ENCODE measurements at regions of chr1 and their contacts with region 1.

Region 1: DNA sequence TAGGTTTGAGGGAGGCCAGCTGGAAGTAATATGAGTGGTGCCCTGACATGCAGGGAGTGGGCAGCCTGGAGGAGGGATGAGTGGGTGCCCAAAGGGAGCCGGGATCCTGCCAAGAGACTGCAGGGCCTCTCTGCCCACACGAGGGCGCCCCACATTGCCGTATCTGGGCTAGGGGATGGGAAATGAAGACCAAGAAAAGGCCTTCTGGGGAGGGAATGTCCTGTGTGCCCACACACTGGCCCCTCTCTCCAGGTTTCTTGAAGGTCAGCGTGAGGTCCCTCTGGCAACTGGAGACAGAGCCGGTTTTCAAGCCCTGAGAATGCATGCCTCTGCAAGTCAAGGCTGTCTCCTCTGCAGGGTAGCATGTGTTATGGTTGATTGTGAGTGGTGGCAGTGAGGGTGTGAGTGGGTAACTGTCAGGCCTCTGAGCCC is 94.1 kb upstream of the PPM1J start:
- DNase-seq: peak; percentile 19 to 71 (median 38)
- ATAC-seq: peak; percentile 87
- H3K4me3 ChIP-seq: no peak overlapping the region
- H3K4me3 Mint-ChIP-seq: no peak overlapping the region
- H3K27ac ChIP-seq: no peak overlapping the region
- H3K27ac Mint-ChIP-seq: no peak overlapping the region
- H3K4me1 ChIP-seq: no peaks in the 10 kb centered on the region
- H3K4me1 Mint-ChIP-seq: no peaks in the 10 kb centered on the region
- H3K27me3 ChIP-seq: no peaks in the 10 kb centered on the region
- H3K27me3 Mint-ChIP-seq: peaks cover 0 to 26% (median 0%) of the 10 kb centered on the region in 5 donors

Region 2: GRCh38 chr1:112882271-112882744 is 73.0 kb after region 1 on chr1:
- CTCF ChIA-PET with region 1: interaction called, 3 read pairs
- POLR2A ChIA-PET with region 1: no interaction called
- intact Hi-C with region 1: loop called in 1 of 2 experiments (anchors 2 kb)
- DNase-seq: no peak
- ATAC-seq: peak; percentile 16
- H3K4me3 ChIP-seq: no peak overlapping the region
- H3K4me3 Mint-ChIP-seq: no peak overlapping the region
- H3K27ac ChIP-seq: no peak overlapping the region
- H3K27ac Mint-ChIP-seq: no peak overlapping the region
- H3K4me1 ChIP-seq: no peaks in the 10 kb centered on the region
- H3K4me1 Mint-ChIP-seq: peaks cover 0 to 3% (median 0%) of the 10 kb centered on the region in 7 donors
- H3K27me3 ChIP-seq: no peaks in the 10 kb centered on the region
- H3K27me3 Mint-ChIP-seq: peaks cover 0 to 24% (median 4%) of the 10 kb centered on the region in 5 donors

Region 3: DNA sequence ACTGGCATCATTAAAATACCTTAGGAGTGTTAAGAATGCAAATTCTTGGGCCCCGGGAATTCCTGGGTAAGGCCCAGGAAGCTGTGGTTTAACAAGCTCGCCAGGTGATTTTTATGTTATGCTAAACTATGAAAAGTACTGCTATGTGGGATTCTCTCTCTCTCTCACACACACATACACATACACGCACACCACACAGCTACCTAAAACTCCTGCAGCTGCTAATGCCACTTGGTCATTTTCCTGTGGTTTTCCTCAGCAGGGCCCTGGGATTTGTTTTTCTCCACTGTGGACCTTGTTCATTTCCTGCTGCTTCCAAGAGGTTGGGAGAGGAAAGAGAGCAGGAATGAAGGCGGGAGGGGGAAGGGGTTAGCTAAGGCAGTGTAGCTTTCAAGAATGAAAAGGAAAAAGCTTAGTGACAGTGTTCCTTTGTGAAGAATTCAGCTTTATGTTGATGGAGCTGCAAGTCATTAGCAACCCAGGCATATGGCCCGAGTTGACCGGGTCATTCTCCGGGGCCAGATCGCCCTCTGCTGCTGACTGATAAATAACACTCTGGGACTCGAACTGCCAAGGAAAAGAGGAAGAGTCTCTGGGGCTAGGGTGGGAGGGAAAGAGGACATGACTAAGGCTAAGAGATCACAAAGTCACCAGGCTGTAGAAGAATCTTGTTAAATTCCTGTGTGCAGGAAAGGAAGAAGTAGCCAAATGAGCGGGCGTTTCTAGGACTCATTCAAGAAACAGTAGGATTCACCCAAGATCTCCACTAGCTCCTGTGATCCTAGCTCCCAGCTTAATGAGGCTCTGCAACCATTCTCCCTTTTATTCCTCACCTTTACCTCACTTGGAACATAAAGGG is 233.2 kb after region 1 on chr1:
- CTCF ChIA-PET with region 1: interaction called, 3 read pairs
- POLR2A ChIA-PET with region 1: no interaction called
- intact Hi-C with region 1: loop called (anchors 1 kb)
- DNase-seq: peak in 1 of 9 donors; percentile 13
- ATAC-seq: peak; percentile 83
- H3K4me3 ChIP-seq: no peak overlapping the region
- H3K4me3 Mint-ChIP-seq: no peak overlapping the region
- H3K27ac ChIP-seq: no peak overlapping the region
- H3K27ac Mint-ChIP-seq: peak overlapping the region in 2 of 9 donors; percentile 58 to 60
- H3K4me1 ChIP-seq: peaks cover 6 to 18% of the 10 kb centered on the region in 2 donors
- H3K4me1 Mint-ChIP-seq: peaks cover 16 to 37% (median 22%) of the 10 kb centered on the region in 7 donors
- H3K27me3 ChIP-seq: no peaks in the 10 kb centered on the region
- H3K27me3 Mint-ChIP-seq: peaks cover 0 to 10% (median 0%) of the 10 kb centered on the region in 5 donors

Region 4: DNA sequence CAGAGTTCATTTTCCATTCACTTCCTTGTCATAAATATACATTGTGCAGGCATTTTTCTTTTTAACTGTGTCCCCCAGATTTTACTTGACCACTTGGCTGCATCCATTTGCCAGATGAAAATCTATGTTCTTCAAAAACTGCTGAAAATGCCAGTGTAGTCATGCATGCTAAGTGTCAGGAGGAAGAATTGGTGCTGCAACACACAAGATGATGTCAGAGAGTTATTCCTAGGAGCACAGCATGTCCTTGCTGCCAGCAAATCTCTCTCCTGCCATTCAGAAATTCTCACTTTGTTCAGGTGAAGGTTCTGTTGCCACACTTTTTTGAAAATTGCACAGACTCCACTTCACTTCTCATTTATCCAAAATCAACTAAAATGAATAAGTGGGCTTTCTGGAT is 474.6 kb after region 1 on chr1:
- CTCF ChIA-PET with region 1: no interaction called
- POLR2A ChIA-PET with region 1: no interaction called
- intact Hi-C with region 1: no loop called
- DNase-seq: no peak
- ATAC-seq: no peak
- H3K4me3 ChIP-seq: no peak overlapping the region
- H3K4me3 Mint-ChIP-seq: no peak overlapping the region
- H3K27ac ChIP-seq: no peak overlapping the region
- H3K27ac Mint-ChIP-seq: no peak overlapping the region
- H3K4me1 ChIP-seq: no peaks in the 10 kb centered on the region
- H3K4me1 Mint-ChIP-seq: no peaks in the 10 kb centered on the region
- H3K27me3 ChIP-seq: peaks cover 0 to 3% of the 10 kb centered on the region in 2 donors
- H3K27me3 Mint-ChIP-seq: peaks cover 18 to 26% (median 22%) of the 10 kb centered on the region in 5 donors

Region 5: GRCh38 chr1:113677250-113678158 is 868.2 kb after region 1 on chr1:
- CTCF ChIA-PET with region 1: no interaction called
- POLR2A ChIA-PET with region 1: no interaction called
- intact Hi-C with region 1: loop called in 1 of 2 experiments (anchors 5 kb)
- DNase-seq: peak in 5 of 9 donors; percentile 23 to 49 (median 39)
- ATAC-seq: peak; percentile 60
- H3K4me3 ChIP-seq: no peak overlapping the region
- H3K4me3 Mint-ChIP-seq: no peak overlapping the region
- H3K27ac ChIP-seq: no peak overlapping the region
- H3K27ac Mint-ChIP-seq: no peak overlapping the region
- H3K4me1 ChIP-seq: no peaks in the 10 kb centered on the region
- H3K4me1 Mint-ChIP-seq: peaks cover 0 to 10% (median 0%) of the 10 kb centered on the region in 7 donors
- H3K27me3 ChIP-seq: no peaks in the 10 kb centered on the region
- H3K27me3 Mint-ChIP-seq: no peaks in the 10 kb centered on the region